ENCODE measurements at regions of chr4 and their contacts with region 1.

Region 1: DNA sequence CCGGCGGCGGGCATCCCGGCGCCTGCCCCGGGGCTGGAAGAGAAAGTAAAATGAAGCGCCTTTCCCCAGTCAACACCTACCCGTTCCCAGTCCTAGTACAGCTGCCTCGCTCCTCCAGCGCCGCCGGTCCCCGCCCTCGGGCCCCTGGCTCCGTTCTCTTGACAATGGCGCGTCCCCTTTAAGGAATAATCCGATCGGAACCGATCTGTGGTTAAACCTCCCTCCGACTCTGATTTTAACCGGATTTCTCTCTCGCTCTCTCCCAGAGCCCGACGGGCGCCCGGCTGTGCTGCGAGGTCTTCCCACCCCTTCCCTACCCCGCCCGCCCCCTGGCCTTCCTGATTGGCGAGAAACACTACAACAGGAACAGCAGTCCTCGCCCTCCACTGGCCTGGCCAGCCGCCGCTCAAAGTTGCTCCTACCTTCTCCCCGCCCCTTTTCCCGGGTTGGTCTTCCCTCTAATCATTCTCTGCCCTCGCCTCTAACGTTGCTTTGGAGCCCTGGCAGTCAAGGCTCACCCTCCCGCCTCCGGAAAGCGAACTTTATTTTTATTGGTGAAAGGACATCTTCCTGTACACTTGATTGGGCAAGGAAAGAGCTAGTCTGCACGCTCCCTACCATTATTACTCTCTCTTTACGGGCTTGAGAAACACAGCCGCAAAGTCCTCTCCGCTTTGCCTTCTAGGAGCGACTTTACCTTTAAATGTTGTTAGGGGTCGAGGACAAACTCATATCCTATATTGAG is at the start of gene FRYL:
- DNase-seq: peak; percentile 98
- H3K4me3 ChIP-seq: peak within 1 kb of the TSS; percentile 97
- H3K27ac ChIP-seq: peak within 1 kb of the TSS; percentile 75
- H3K4me1 ChIP-seq: peaks cover 25% of the 10 kb centered on the region
- H3K27me3 ChIP-seq: no peaks in the 10 kb centered on the region
- CTCF ChIP-seq: no peak
- total RNA-seq, gene FRYL: 43.5 and 53.9 TPM in 2 replicates

Region 2: DNA sequence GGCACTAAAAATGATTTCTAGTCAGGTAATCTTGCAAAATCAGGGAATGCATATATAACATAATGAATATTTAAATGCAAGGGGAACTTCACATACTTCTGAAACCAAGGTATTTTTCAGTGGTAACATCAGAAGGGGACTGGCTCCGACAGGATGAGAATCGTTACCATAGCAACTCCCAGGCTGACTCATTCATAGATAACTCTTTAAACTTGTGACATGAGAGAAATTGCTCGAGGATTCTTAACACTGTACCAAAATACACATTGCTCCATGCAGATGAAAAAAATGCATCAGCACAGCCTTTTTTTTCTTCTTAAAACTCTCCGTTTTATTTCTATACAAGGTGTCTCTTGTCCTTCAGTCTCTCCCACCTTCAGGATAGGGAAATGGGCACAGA is 1634.5 kb before region 1 on chr4:
- CTCF ChIA-PET with region 1: no interaction called
- POLR2A ChIA-PET with region 1: no interaction called
- intact Hi-C with region 1: no loop called
- DNase-seq: no peak
- H3K4me3 ChIP-seq: no peak overlapping the region
- H3K27ac ChIP-seq: no peak overlapping the region
- H3K4me1 ChIP-seq: no peaks in the 10 kb centered on the region
- H3K27me3 ChIP-seq: no peaks in the 10 kb centered on the region
- CTCF ChIP-seq: no peak

Region 3: GRCh38 chr4:47862297-47862696 is 917.9 kb before region 1 on chr4:
- CTCF ChIA-PET with region 1: no interaction called
- POLR2A ChIA-PET with region 1: no interaction called
- intact Hi-C with region 1: no loop called
- DNase-seq: no peak
- H3K4me3 ChIP-seq: no peak overlapping the region
- H3K27ac ChIP-seq: no peak overlapping the region
- H3K4me1 ChIP-seq: no peaks in the 10 kb centered on the region
- H3K27me3 ChIP-seq: no peaks in the 10 kb centered on the region
- CTCF ChIP-seq: no peak

Region 4: GRCh38 chr4:48570646-48571220 is 209.4 kb before region 1 on chr4:
- CTCF ChIA-PET with region 1: no interaction called
- POLR2A ChIA-PET with region 1: no interaction called
- intact Hi-C with region 1: no loop called
- DNase-seq: no peak
- H3K4me3 ChIP-seq: no peak overlapping the region
- H3K27ac ChIP-seq: no peak overlapping the region
- H3K4me1 ChIP-seq: no peaks in the 10 kb centered on the region
- H3K27me3 ChIP-seq: no peaks in the 10 kb centered on the region
- CTCF ChIP-seq: no peak

Region 5: GRCh38 chr4:48623182-48623780 is 156.9 kb before region 1 on chr4:
- CTCF ChIA-PET with region 1: no interaction called
- POLR2A ChIA-PET with region 1: no interaction called
- intact Hi-C with region 1: no loop called
- DNase-seq: no peak
- H3K4me3 ChIP-seq: no peak overlapping the region
- H3K27ac ChIP-seq: no peak overlapping the region
- H3K4me1 ChIP-seq: no peaks in the 10 kb centered on the region
- H3K27me3 ChIP-seq: no peaks in the 10 kb centered on the region
- CTCF ChIP-seq: no peak

Region 6: DNA sequence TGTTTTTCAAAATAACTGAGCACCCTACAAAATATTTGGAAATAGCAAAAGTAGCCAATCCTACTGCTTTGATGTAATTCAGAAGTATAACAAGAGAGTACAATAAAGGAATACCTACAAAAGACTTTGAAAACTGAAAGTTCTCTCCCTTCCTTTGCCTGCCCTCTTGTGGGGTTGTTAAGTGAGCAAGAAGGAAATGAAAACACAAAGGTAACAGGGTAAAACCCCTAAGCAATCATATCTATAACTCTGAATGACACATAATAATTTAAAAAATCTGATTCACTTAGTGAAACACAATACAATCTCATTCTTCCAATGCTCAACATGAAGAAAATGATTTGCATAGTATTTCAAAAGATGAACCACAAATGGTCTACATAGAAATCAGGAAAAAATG is 98.3 kb before region 1 on chr4:
- CTCF ChIA-PET with region 1: no interaction called
- POLR2A ChIA-PET with region 1: no interaction called
- intact Hi-C with region 1: loop called (anchors 5 kb)
- DNase-seq: peak in 1 of 2 experiments; percentile 47
- H3K4me3 ChIP-seq: no peak overlapping the region
- H3K27ac ChIP-seq: no peak overlapping the region
- H3K4me1 ChIP-seq: no peaks in the 10 kb centered on the region
- H3K27me3 ChIP-seq: no peaks in the 10 kb centered on the region
- CTCF ChIP-seq: peak; percentile 53; the same call in 1 of the 2 replicates

Region 7: DNA sequence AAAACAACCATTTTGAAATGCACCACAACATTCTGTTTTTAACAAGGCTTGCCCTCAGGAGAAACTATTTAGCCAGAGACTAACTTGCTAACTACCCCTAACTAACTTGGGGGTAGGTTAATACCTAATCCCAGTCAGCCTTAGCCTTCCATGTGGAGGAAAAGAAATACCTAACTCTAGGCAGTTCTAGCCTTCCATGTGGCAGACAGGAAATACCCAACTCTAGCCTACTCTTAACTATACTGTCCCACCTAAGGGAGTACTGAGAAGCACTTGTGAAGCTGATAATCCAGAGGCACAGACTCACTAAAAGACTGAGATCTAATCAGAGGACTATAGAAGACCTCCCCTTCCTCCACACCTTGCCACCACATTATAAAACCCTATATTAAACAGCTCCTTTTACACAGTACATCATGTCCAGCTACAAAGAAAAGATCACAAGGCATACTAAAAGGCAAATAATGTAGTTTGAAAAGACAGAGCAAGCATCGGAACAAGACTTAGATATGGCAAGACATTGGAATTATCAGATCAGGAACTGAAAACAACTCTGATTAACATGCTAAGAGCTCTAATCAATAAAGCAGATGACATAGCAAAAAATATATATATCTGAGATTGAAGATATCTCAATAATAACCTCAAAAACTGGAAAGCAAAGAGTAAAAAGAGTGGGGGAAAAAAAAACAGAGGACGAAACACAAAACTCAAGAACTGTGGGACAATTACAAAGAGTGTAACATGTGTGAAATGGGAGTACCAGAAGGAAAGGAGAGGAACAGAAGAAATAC is 52.3 kb before region 1 on chr4:
- CTCF ChIA-PET with region 1: no interaction called
- POLR2A ChIA-PET with region 1: no interaction called
- intact Hi-C with region 1: loop called (anchors 2 kb)
- DNase-seq: no peak
- H3K4me3 ChIP-seq: no peak overlapping the region
- H3K27ac ChIP-seq: peak overlapping the region; percentile 89
- H3K4me1 ChIP-seq: peaks cover 31% of the 10 kb centered on the region
- H3K27me3 ChIP-seq: no peaks in the 10 kb centered on the region
- CTCF ChIP-seq: no peak

Region 8: DNA sequence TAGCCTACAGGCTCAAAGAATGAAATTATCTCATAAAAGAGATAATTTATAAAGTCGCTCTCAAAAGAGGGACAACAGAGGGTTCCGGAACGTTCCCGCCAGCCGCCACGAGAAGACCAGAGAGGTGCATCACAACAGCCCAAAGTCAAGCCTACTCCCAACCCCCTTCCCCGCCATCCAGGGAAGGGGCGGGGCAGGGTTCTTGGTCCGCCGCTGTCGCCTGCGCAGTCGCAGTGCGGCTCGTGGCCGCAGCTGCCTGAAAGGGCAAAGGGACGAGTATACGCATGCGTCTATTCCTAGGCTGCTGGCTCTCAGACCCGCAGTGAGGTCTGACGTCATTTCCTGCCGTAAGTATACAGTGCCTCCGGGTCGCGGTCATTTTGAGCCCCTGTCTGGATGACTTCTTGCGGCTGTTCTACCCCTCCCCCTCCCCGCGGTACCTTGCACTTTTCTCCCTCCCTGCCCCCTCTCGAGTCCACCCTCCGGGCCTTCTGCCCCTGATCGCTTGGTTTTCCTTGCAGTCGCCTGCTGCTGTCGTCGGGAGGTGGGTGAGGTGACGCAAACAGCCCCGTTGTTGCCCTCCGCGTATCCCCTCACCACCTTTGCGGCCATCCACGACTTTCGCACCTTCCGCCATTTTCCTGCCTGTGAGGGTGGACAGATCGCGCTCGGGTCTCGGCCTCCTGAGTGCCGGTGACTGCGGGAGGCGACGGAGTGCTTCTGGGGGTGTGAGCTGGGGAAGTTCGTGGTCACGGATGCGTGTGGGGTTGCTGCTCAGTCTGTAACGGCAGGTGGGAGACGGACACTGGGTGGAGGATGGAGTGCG is 50.7 kb after region 1 on chr4 and contains the start of gene OCIAD1:
- CTCF ChIA-PET with region 1: no interaction called
- POLR2A ChIA-PET with region 1: interaction called, 9 read pairs
- intact Hi-C with region 1: loop called (anchors 1 kb)
- DNase-seq: peak; percentile 94 to 96
- H3K4me3 ChIP-seq: peak within 1 kb of the TSS; percentile 92
- H3K27ac ChIP-seq: peak within 1 kb of the TSS; percentile 81
- H3K4me1 ChIP-seq: peaks cover 19% of the 10 kb centered on the region
- H3K27me3 ChIP-seq: no peaks in the 10 kb centered on the region
- CTCF ChIP-seq: no peak
- total RNA-seq, gene OCIAD1: 104 and 110 TPM in 2 replicates

Region 9: DNA sequence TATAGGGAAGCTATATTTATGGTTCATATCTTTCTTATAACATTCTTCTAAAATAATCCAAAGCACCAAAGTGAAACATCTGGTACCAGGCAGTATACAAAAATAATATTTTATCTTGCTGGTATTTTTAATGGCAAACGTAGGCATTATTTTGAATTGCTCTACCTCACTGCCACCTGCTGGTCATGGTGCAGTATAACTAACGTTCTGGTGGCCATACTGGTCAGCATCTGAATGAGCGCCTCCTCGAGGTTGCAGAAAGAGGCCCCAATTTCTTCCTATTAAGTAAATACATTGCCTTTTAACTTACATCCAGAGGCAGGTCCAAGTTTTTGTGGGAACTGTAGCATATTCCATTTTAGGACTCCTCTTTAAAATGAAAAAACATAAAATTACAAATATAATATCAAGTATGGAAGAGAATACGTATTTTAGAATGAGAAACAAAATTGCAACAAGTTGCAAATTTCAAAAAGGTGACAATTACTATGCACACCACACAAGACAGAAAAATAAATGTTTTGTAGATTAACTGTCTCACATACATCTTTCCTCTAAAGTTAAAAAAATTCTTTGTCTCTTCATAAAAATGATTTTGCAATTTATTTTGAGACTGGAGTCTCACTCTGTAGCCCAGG is 183.0 kb after region 1 on chr4:
- CTCF ChIA-PET with region 1: no interaction called
- POLR2A ChIA-PET with region 1: interaction called, 3 read pairs
- intact Hi-C with region 1: loop called (anchors 1 kb)
- DNase-seq: peak; percentile 63 to 67
- H3K4me3 ChIP-seq: no peak overlapping the region
- H3K27ac ChIP-seq: no peak overlapping the region
- H3K4me1 ChIP-seq: peaks cover 21% of the 10 kb centered on the region
- H3K27me3 ChIP-seq: no peaks in the 10 kb centered on the region
- CTCF ChIP-seq: peak; percentile 97

Measured in PC-9 (cell line).